ENCODE measurements at regions of chr3 and their contacts with region 1.

Region 1: DNA sequence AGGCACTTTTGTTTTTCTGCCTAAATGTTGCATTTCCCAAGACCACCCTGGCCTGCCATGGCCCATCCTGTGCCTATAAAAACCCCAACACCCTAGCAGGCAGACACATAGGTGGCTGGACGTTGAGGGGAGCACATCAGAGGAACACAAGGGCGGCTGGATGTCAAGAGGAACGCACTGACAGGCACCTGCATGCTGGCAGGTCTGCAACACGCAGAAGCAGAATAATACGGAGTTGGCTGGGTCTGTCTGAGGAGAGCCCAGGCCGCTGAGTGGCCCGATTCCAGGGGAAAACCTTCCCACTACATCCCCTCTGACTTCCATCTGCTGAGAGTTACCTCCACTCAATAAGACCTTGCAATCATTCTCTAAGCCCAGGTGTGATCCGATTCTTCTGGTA is 765.6 kb downstream of the PLOD2 start:
- DNase-seq: no peak
- H3K4me3 ChIP-seq: no peak overlapping the region
- H3K27ac ChIP-seq: no peak overlapping the region
- H3K4me1 ChIP-seq: no peaks in the 10 kb centered on the region
- H3K27me3 ChIP-seq: no peaks in the 10 kb centered on the region
- CTCF ChIP-seq: no peak
- EP300 ChIP-seq: no peak
- POLR2A ChIP-seq: no peak

Region 2: DNA sequence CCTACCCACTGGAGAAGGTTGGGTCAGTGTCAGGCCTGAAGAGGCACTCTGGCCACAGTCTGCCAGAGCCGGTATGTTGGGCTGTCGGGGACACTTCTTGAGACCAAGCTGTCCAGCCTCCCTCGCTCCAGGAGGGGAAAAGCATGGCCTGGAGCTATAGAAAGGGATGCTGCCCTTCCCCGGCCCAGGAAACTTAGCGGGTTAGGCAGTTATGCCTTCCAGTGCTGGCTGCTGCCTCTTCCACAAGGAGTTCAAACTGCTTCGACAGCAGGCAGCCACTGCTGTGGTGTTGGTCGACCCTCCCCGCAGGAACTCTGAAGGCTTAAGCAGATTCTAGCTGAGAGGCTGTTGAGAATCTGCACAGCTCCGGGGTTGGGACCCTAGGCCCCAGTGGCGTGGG is 604.4 kb before region 1 on chr3:
- intact Hi-C with region 1: loop called in 1 of 4 experiments (anchors 5 kb)
- DNase-seq: no peak
- H3K4me3 ChIP-seq: no peak overlapping the region
- H3K27ac ChIP-seq: no peak overlapping the region
- H3K4me1 ChIP-seq: no peaks in the 10 kb centered on the region
- H3K27me3 ChIP-seq: no peaks in the 10 kb centered on the region
- CTCF ChIP-seq: no peak
- EP300 ChIP-seq: no peak
- POLR2A ChIP-seq: no peak